Activated B cell treated with CpG ODN at 0.5 μM for 24 hours (primary cell): ENCODE measurements at regions of chr14 and their contacts with region 1.

Region 1: GRCh38 chr14:105537369-105538164 is 11.2 kb downstream of the TMEM121 start:
- DNase-seq: peak; percentile 78
- ATAC-seq: peak; percentile 96
- H3K4me3 Mint-ChIP-seq: no peak overlapping the region
- H3K27ac Mint-ChIP-seq: no peak overlapping the region
- H3K4me1 Mint-ChIP-seq: peaks cover 18% of the 10 kb centered on the region
- H3K27me3 Mint-ChIP-seq: peaks cover 2% of the 10 kb centered on the region
- CTCF ChIP-seq: peak; percentile 31

Region 2: DNA sequence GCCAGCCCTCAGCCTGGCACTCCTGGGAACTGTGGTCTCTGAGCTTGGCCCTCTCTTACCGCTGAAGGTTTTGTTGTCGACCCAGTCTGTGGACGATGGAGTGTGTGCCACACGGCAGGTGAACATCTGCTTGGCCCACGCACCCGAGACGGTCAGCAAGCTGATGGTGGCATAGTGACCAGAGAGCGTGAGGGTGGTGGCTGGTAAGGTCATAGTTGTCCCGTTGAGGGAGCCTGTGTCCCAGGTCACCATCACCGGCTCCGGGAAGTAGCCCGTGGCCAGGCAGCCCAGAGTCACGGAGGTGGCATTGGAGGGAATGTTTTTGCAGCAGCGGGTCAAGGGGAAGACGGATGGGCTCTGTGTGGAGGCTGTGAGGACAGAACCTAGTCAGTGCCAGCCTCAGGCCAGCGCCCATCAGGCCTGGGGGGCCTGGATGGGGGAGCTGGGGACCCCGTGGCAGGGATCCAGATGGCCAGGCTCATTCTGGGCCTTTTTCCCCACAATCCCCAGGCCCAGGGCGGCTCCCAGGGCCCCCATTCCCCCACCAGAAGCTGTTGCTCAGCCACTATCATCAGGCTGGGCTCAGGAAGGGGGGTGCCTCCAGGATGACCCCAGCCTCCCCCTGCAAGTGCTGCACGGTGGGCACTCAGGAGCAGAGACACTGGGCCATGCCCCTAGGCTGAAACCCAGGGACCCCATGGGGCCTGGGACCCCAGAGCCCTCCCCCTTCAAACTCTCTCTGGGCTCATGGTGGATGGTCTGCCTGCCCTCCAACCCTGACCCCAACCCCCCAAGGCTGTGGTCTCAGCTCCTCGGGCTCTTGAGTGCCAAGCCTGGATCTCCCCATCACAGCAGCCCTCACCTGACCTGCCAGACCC is 64.0 kb after region 1 on chr14:
- CTCF ChIA-PET with region 1: no interaction called
- POLR2A ChIA-PET with region 1: no interaction called
- intact Hi-C with region 1: no loop called
- DNase-seq: no peak
- ATAC-seq: no peak
- H3K4me3 Mint-ChIP-seq: no peak overlapping the region
- H3K27ac Mint-ChIP-seq: no peak overlapping the region
- H3K4me1 Mint-ChIP-seq: peaks cover 16% of the 10 kb centered on the region
- H3K27me3 Mint-ChIP-seq: no peaks in the 10 kb centered on the region
- CTCF ChIP-seq: no peak

Region 3: DNA sequence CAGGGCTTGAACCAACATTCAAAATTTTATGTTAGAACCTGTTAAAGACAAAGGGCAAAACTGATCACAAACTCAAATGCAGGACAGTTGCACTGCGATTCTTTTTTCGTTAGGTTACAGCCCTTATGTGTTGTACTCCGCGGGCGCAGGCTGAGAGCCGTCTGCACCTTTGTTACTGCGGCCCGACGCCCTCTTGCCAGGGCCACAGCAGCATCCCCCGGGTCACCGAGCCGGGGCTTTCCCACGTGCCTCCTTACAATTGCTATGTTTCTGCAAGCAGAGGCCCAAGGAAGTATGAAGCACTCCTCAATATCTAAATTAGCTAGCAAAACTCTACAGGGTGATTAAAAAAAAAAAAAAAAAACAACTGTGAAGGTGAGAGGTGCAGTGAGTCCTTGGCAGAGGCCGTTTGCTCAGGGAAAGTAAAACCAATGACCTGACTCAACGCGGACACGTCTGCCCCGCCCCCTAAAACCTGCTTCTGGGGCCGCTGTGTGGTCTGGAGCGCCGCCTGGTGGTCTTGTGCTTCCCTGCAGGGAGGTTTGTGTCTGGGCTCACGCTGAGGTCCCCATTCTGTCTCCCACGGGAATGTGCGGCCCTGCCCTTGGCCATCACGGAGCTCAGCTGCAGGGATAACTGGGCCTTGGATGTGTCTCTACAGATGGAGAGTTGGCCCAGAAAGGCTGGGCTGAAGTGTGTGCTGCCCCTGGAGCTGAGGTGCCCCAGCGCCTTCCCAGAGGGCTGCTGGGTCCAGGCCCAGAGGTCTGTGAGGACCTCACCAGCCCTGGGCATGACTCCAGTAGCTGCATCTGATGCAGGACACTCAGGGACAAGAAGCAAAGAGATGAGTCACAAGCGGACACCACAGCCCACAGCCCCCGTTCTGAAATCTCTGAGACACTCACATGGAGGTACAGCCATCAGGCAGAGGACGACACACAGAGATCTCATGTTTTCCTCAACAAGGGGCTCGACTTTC is 407.4 kb after region 1 on chr14:
- CTCF ChIA-PET with region 1: no interaction called
- POLR2A ChIA-PET with region 1: no interaction called
- intact Hi-C with region 1: loop called (anchors 10 kb)
- DNase-seq: peak; percentile 53
- ATAC-seq: peak; percentile 70
- H3K4me3 Mint-ChIP-seq: peak overlapping the region; percentile 24
- H3K27ac Mint-ChIP-seq: peak overlapping the region; percentile 46
- H3K4me1 Mint-ChIP-seq: peaks cover 42% of the 10 kb centered on the region
- H3K27me3 Mint-ChIP-seq: no peaks in the 10 kb centered on the region
- CTCF ChIP-seq: no peak

Region 4: DNA sequence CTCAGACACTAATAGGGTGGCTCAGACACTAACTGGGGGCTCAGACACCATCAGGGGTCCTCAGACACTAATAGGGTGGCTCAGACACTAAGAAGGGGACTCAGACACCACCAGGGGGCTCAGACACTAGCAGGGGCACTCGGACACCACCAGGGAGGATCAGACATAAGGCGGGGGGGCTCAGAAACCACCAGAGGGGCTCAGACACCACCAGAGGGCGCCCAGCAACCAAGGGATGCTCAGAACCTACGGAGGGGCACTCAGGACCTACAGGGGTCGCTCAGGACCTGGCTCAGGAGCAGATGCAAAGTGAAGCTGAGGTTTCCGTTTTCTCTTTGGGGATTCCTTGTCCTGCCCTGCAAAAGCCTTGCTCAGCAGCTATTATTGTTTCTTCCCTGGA is 437.3 kb after region 1 on chr14:
- CTCF ChIA-PET with region 1: no interaction called
- POLR2A ChIA-PET with region 1: no interaction called
- intact Hi-C with region 1: no loop called
- DNase-seq: no peak
- ATAC-seq: peak; percentile 77
- H3K4me3 Mint-ChIP-seq: no peak overlapping the region
- H3K27ac Mint-ChIP-seq: no peak overlapping the region
- H3K4me1 Mint-ChIP-seq: peaks cover 3% of the 10 kb centered on the region
- H3K27me3 Mint-ChIP-seq: no peaks in the 10 kb centered on the region
- CTCF ChIP-seq: no peak

Region 5: GRCh38 chr14:106013879-106014376 is 476.4 kb after region 1 on chr14:
- CTCF ChIA-PET with region 1: no interaction called
- POLR2A ChIA-PET with region 1: no interaction called
- intact Hi-C with region 1: loop called (anchors 5 kb)
- DNase-seq: no peak
- ATAC-seq: no peak
- H3K4me3 Mint-ChIP-seq: no peak overlapping the region
- H3K27ac Mint-ChIP-seq: no peak overlapping the region
- H3K4me1 Mint-ChIP-seq: peaks cover 2% of the 10 kb centered on the region
- H3K27me3 Mint-ChIP-seq: no peaks in the 10 kb centered on the region
- CTCF ChIP-seq: no peak

Region 6: GRCh38 chr14:106039400-106039799 is 501.8 kb after region 1 on chr14:
- CTCF ChIA-PET with region 1: no interaction called
- POLR2A ChIA-PET with region 1: no interaction called
- intact Hi-C with region 1: loop called (anchors 5 kb)
- DNase-seq: peak; percentile 24
- ATAC-seq: peak; percentile 82
- H3K4me3 Mint-ChIP-seq: no peak overlapping the region
- H3K27ac Mint-ChIP-seq: no peak overlapping the region
- H3K4me1 Mint-ChIP-seq: peaks cover 4% of the 10 kb centered on the region
- H3K27me3 Mint-ChIP-seq: no peaks in the 10 kb centered on the region
- CTCF ChIP-seq: no peak

Region 7: DNA sequence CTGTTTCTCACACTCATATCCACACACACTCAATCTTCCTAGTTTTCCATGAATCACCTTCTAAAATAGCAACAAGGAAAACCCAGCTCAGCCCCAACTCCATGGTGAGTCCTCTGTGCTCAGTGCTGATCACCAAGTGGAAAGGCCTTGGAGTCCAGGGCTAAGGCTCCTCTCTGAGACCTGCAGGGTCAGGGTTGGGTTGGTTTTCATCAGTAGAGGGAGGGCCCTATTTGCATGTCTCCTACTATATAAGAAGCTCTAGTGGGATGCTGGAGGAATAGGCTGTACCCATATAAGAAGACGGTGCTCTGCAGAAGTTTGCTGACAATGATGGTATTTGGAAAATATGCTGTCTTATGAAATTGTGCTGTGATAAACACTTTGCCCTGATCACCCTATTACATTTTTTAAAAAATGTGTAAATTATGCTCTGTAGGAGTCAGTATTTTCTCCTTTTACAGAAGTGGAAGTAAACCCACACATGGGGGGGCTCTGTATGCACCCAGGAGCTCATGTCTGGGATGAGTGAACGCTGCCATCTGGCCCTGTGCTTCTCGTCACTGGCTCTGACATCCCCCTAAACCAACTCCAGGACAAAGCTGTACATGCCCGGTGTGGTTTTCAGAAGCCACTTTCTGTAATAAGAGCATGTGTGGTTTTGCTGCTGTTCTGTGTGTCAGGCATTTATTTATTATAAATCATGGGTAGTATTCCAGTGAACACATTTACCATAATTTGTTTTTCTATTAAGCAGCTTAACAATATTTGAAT is 525.1 kb after region 1 on chr14:
- CTCF ChIA-PET with region 1: interaction called, 3 read pairs
- POLR2A ChIA-PET with region 1: no interaction called
- intact Hi-C with region 1: loop called (anchors 5 kb)
- DNase-seq: no peak
- ATAC-seq: peak; percentile 52
- H3K4me3 Mint-ChIP-seq: peak overlapping the region; percentile 73
- H3K27ac Mint-ChIP-seq: no peak overlapping the region
- H3K4me1 Mint-ChIP-seq: peaks cover 17% of the 10 kb centered on the region
- H3K27me3 Mint-ChIP-seq: peaks cover 3% of the 10 kb centered on the region
- CTCF ChIP-seq: no peak

Region 8: DNA sequence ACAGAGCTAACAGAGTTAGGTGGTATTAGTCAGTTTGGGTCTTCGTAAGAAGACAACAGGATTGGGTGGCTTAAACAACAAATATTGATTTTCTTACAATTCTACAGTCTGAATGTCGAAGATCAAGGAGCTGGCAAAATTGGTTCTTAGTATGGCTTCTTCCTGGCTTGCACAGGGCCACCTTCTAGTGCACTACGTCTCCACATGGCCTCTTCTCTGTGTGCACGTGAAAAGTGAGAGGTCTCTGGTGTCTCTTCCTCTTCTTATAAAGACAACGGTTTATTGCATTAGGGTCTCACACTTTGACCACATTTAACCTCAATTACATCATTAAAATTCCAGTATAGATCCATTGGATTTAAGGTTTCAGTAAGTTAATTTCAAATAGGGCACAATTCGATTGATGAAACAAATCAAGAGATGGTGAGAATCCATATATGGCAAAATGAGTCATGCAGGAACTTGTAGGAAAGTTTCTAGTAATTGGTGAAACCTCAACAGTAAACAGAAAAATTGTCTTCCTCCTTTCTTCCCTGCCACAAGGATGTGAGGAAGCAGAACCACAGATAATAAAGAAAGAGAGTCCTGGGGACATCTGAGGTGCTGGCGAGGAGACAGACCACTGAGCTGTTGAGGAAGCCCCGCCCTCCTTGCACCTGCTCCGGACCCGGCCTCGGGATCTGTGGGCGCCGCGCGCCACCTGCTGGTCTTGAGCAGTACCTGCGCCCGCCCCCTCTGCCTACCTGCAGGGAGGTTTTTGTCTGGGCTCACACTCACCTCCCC is 835.5 kb after region 1 on chr14:
- CTCF ChIA-PET with region 1: interaction called, 3 read pairs
- POLR2A ChIA-PET with region 1: no interaction called
- intact Hi-C with region 1: loop called (anchors 10 kb)
- DNase-seq: peak; percentile 67
- ATAC-seq: peak; percentile 98
- H3K4me3 Mint-ChIP-seq: peak overlapping the region; percentile 64
- H3K27ac Mint-ChIP-seq: no peak overlapping the region
- H3K4me1 Mint-ChIP-seq: peaks cover 24% of the 10 kb centered on the region
- H3K27me3 Mint-ChIP-seq: peaks cover 2% of the 10 kb centered on the region
- CTCF ChIP-seq: no peak

Region 9: GRCh38 chr14:106414464-106414863 is 876.9 kb after region 1 on chr14:
- CTCF ChIA-PET with region 1: interaction called, 4 read pairs
- POLR2A ChIA-PET with region 1: no interaction called
- intact Hi-C with region 1: loop called (anchors 5 kb)
- DNase-seq: no peak
- ATAC-seq: no peak
- H3K4me3 Mint-ChIP-seq: no peak overlapping the region
- H3K27ac Mint-ChIP-seq: no peak overlapping the region
- H3K4me1 Mint-ChIP-seq: no peaks in the 10 kb centered on the region
- H3K27me3 Mint-ChIP-seq: peaks cover 3% of the 10 kb centered on the region
- CTCF ChIP-seq: no peak